ACHN (cell line): ENCODE measurements at regions of chr10 and their contacts with region 1.

Region 1: GRCh38 chr10:74255888-74256357 is 104.9 kb downstream of the ADK start:
- DNase-seq: no peak

Region 2: GRCh38 chr10:74039561-74040145 is 216.3 kb before region 1 on chr10:
- in situ Hi-C with region 1: no loop called
- DNase-seq: no peak

Region 3: GRCh38 chr10:75019370-75019769 is 763.4 kb after region 1 on chr10:
- in situ Hi-C with region 1: loop called (anchors 25 kb)
- DNase-seq: peak; percentile 21